ENCODE measurements at regions of chr17 and their contacts with region 1.

Region 1: DNA sequence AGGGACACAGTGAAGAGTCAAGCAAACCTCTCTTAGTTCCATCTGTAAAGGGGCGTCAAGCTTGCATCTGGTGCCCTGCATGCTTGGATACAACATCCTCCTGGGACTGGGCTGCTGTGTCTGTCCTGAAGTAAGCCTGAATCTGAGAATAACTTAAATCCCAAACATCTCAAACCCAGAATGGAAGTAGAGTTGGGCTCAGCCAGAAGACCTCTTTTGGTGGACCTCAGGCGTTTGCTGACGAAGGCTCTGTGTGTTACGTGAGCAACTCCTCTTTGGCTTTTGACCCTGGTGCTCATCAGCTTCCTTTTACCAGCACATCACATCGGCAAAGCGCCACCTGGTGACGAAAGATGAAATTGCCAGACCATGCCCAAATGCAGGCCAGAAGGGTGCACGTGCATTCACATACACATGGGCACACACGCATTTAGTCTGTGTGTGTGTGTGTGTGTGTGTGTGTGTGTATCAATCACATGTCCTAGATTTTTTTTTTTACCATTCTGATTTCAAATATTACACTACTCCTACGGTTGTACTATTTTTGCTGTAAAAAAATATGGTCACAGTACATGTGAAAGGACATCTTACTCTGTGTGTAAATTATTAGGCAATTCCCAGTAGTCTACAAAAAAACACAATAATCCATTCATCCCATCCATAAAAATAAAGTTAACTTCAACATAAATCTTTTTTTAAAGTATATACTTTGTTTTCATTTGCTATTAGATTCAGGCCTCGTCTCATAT is 41.1 kb upstream of the FOXJ1 start:
- DNase-seq: peak; percentile 77 to 96 (median 91)
- ATAC-seq: peak; percentile 70 to 73
- H3K4me3 Mint-ChIP-seq: peak overlapping the region in 9 of 10 donors; percentile 6 to 75 (median 55)
- H3K27ac Mint-ChIP-seq: peak overlapping the region; percentile 31 to 98 (median 95)
- H3K4me1 Mint-ChIP-seq: peaks cover 23 to 69% (median 60%) of the 10 kb centered on the region in 4 donors
- H3K27me3 Mint-ChIP-seq: no peaks in the 10 kb centered on the region

Region 2: DNA sequence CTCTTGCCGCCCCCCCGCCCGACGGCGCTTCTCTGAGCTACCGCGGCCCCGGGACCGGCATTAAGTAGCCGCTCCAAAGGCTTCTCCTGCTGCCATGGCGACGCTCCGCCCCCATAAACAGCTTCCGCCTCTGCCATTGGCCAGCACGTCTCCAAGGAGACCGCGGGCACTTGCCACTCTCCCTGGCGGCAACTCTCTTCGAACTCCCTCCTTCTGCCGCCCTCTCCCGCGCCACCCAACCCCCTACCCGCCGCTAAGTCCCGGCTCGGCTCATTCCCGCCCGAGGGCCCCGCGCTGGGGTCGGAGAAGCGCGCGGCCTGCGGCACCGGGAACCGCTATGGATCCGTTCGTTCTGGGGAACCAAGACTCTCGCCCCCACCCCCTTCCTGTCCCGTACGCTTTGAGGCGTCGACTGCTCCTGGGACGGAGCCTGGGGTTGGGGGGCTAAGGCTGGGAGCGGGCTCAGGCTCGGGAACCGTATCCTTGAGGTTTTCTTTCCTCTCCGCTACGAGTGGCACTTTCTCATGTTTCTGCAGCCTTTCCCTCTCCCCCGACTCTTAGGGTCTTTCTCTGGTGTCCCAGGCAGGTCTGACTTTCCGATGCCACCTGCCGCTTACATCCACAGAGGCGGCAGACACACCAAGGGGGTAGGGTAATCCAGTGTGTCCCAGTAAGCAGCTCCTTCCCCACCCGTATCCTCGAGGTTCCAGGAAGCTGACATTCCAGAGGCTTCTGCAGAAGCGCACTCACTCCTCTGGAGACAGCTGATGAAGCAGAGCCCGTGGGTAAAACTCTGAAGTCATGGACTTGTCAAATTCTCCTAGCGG is 40.8 kb before region 1 on chr17 and contains the start of gene FOXJ1:
- POLR2A ChIA-PET with region 1: interaction called, 168 read pairs
- DNase-seq: peak; percentile 83 to 98 (median 94)
- ATAC-seq: peak; percentile 60 to 73
- H3K4me3 Mint-ChIP-seq: peak within 1 kb of the TSS; percentile 81 to 92 (median 87)
- H3K27ac Mint-ChIP-seq: peak within 1 kb of the TSS; percentile 92 to 100 (median 97)
- H3K4me1 Mint-ChIP-seq: peaks cover 38 to 73% (median 68%) of the 10 kb centered on the region in 4 donors
- H3K27me3 Mint-ChIP-seq: peaks cover 0 to 2% (median 0%) of the 10 kb centered on the region in 5 donors
- polyA plus RNA-seq, gene FOXJ1: 0.28 to 2.8 (median 1.8) TPM

Region 3: GRCh38 chr17:76166168-76166567 is 16.0 kb before region 1 on chr17:
- POLR2A ChIA-PET with region 1: interaction called, 41 read pairs
- DNase-seq: no peak
- ATAC-seq: no peak
- H3K4me3 Mint-ChIP-seq: no peak overlapping the region
- H3K27ac Mint-ChIP-seq: peak overlapping the region in 4 of 10 donors; percentile 4 to 73 (median 36)
- H3K4me1 Mint-ChIP-seq: peaks cover 3 to 27% (median 17%) of the 10 kb centered on the region in 4 donors
- H3K27me3 Mint-ChIP-seq: no peaks in the 10 kb centered on the region

Region 4: GRCh38 chr17:76217081-76217480 is 34.9 kb after region 1 on chr17:
- POLR2A ChIA-PET with region 1: no interaction called
- DNase-seq: no peak
- ATAC-seq: no peak
- H3K4me3 Mint-ChIP-seq: peak overlapping the region in 1 of 10 donors; percentile 30
- H3K27ac Mint-ChIP-seq: peak overlapping the region in 3 of 10 donors; percentile 53 to 79 (median 64)
- H3K4me1 Mint-ChIP-seq: peaks cover 23 to 60% (median 52%) of the 10 kb centered on the region in 4 donors
- H3K27me3 Mint-ChIP-seq: no peaks in the 10 kb centered on the region

Region 5: GRCh38 chr17:76246080-76247066 is 64.2 kb after region 1 on chr17:
- POLR2A ChIA-PET with region 1: interaction called, 10 read pairs
- DNase-seq: peak in 5 of 10 donors; percentile 24 to 69 (median 31)
- ATAC-seq: peak; percentile 83 to 91
- H3K4me3 Mint-ChIP-seq: peak overlapping the region; percentile 42 to 84 (median 70)
- H3K27ac Mint-ChIP-seq: peak overlapping the region; percentile 70 to 96 (median 91)
- H3K4me1 Mint-ChIP-seq: peaks cover 31 to 76% (median 66%) of the 10 kb centered on the region in 4 donors
- H3K27me3 Mint-ChIP-seq: peaks cover 0 to 1% (median 0%) of the 10 kb centered on the region in 5 donors

Region 6: GRCh38 chr17:76264755-76265596 is 82.8 kb after region 1 on chr17 and contains the start of gene UBALD2:
- POLR2A ChIA-PET with region 1: interaction called, 527 read pairs
- DNase-seq: peak; percentile 90 to 99 (median 98)
- ATAC-seq: peak; percentile 80 to 86
- H3K4me3 Mint-ChIP-seq: peak within 1 kb of the TSS; percentile 88 to 97 (median 92)
- H3K27ac Mint-ChIP-seq: peak within 1 kb of the TSS; percentile 91 to 98 (median 96)
- H3K4me1 Mint-ChIP-seq: peaks cover 35 to 79% (median 64%) of the 10 kb centered on the region in 4 donors
- H3K27me3 Mint-ChIP-seq: no peaks in the 10 kb centered on the region
- polyA plus RNA-seq, gene UBALD2: 6.6 to 9.7 (median 8.2) TPM

Measured in naive thymus-derived CD8-positive, alpha-beta T cell (primary cell).